ENCODE measurements at regions of chr13 and their contacts with region 1.

Region 1: DNA sequence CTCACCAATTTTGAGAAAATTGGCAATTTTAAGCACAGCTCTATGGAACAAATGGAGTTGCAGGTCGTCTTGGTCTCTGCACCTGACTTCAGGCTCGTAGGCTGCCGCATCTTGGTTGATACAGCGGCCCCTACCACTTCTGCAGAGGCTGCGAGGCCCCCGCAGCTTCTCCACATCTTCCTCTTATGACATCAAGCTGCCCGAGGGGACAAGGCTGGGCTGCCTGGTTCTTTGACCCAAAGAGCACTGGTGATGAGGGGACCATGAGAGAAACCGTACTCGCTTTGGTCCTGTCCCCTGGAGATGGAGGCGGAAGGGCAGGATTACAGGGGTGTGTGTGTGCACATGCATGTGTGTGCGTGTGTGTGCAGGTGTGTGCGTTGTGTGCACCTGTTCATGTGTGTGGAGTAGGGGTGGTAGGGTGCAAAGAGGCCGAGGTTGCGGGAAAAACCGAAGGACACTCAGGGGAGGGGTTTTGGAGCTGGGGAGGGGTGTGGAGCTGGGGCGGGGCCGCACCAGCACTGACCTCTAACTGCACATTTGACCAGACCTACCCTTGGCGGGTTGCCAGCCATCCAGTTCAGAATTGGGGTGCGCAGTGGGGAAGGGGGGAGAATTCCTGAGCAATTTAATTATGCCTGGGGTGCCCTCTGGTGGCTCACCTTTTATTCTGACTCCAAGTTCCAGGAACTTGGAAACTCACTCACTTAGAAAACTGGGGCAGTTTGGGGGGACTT is 65.1 kb upstream of the ARHGEF7 start:
- DNase-seq: peak in 1 of 2 experiments; percentile 32
- H3K4me3 ChIP-seq: no peak overlapping the region
- H3K27ac ChIP-seq: no peak overlapping the region
- H3K4me1 ChIP-seq: no peaks in the 10 kb centered on the region
- H3K27me3 ChIP-seq: no peaks in the 10 kb centered on the region
- CTCF ChIP-seq: peak; percentile 80

Region 2: DNA sequence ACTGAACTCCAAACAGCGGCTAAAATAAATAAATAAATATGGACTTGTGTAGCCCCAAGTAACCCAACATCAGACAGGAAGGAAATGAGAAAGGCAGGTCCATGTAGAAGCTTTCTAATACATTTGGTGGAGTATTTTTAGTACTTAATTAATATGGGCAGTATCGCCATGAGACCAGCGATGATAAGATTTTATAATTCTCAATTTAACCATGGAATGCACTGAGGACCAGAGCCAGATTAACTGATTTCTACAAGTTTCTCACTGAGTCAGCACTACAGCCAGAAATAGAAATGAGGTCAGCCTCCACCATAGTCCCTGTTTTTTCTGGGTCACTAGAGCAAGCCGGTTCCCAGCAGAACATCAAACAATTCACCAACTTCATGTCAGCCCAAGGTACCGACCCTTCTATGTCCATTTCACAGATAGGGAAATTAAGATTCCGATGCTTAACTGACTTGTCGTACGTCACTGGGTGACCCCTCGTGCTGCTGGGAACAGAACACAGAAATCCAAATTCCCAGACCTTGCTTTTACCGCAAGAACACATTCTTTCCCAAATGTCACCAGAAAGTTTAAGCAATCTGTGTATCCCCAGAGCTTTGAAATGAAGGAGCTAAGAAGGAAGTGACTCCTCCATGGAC is 833.5 kb before region 1 on chr13:
- CTCF ChIA-PET with region 1: no interaction called
- POLR2A ChIA-PET with region 1: no interaction called
- intact Hi-C with region 1: loop called (anchors 5 kb)
- DNase-seq: peak in 1 of 2 experiments; percentile 34
- H3K4me3 ChIP-seq: no peak overlapping the region
- H3K27ac ChIP-seq: no peak overlapping the region
- H3K4me1 ChIP-seq: no peaks in the 10 kb centered on the region
- H3K27me3 ChIP-seq: no peaks in the 10 kb centered on the region
- CTCF ChIP-seq: no peak

Region 3: DNA sequence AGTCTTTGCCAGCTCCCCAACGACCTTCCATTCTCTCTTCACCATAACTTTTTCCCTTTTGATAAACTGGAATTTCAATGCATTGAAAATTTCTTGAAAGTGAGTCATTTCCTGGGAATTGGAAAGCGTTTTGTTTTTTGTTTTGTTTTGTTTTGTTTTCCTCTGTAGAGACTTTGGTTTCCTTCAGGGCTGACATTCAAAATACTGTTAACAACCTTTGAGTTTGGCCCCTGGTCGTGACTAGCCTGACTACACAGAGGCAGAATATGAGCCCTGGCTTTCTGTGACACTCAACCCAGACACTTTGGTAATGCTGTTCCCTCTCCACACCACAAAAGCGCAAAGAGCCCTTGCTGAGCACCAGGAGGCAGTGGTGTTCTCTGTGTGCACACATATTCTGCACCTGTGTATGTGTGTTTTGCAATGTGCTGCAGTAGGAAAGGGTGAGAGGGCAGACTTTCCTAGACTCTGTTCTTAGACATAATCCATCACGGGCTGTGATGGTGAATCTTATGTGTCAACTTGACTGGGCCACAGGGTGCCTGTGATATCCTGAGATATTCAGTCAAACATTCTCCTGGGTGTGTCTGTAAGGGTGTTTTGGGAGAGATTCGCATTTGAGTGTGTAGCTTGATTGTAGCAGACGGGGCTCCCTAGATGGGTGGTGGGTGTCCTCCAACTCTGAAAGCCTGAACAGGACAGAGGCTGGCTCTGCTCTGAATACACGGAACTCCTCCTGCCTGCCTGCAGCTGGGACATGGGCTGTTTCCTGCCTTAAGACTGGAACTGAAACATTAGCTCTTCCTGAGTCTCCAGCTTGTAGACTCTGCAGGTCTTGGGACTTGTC is 105.6 kb before region 1 on chr13:
- CTCF ChIA-PET with region 1: no interaction called
- POLR2A ChIA-PET with region 1: no interaction called
- intact Hi-C with region 1: loop called (anchors 1 kb)
- DNase-seq: peak; percentile 33 to 58
- H3K4me3 ChIP-seq: no peak overlapping the region
- H3K27ac ChIP-seq: 0 out of 2 replicates have a peak overlapping the region, but pooled peaks have one; percentile 11
- H3K4me1 ChIP-seq: peaks cover 17% of the 10 kb centered on the region
- H3K27me3 ChIP-seq: no peaks in the 10 kb centered on the region
- CTCF ChIP-seq: peak; percentile 76